ENCODE measurements at regions of chr11 and their contacts with region 1.

Region 1: DNA sequence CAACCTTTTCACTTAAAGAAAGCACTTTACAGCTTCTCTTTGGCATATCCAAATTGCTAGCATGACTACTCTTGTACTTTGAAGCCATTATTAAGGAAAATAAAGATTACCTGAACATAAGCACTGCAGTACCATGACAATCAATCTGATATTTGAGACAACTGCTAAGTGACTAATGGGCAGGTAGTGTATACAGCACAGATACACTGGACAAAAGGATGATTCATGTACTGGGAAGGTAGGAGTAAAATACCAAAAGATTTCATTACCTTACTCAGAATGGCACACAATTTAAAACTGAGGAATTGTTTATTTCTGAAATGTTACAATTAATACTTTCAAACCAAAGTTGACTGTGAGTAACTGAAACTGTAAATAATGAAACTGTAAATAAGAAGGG is 1054.3 kb upstream of the TENM4 start:
- DNase-seq: no peak
- H3K4me3 ChIP-seq: no peak overlapping the region
- H3K4me3 Mint-ChIP-seq: no peak overlapping the region
- H3K27ac ChIP-seq: no peak overlapping the region
- H3K27ac Mint-ChIP-seq: no peak overlapping the region
- H3K4me1 ChIP-seq: no peaks in the 10 kb centered on the region
- H3K4me1 Mint-ChIP-seq: no peaks in the 10 kb centered on the region
- H3K27me3 ChIP-seq: no peaks in the 10 kb centered on the region
- H3K27me3 Mint-ChIP-seq: no peaks in the 10 kb centered on the region

Region 2: GRCh38 chr11:80505771-80506170 is 10.7 kb after region 1 on chr11:
- CTCF ChIA-PET with region 1: no interaction called
- POLR2A ChIA-PET with region 1: no interaction called
- intact Hi-C with region 1: no loop called
- DNase-seq: no peak
- H3K4me3 ChIP-seq: no peak overlapping the region
- H3K4me3 Mint-ChIP-seq: no peak overlapping the region
- H3K27ac ChIP-seq: no peak overlapping the region
- H3K27ac Mint-ChIP-seq: no peak overlapping the region
- H3K4me1 ChIP-seq: no peaks in the 10 kb centered on the region
- H3K4me1 Mint-ChIP-seq: no peaks in the 10 kb centered on the region
- H3K27me3 ChIP-seq: no peaks in the 10 kb centered on the region
- H3K27me3 Mint-ChIP-seq: no peaks in the 10 kb centered on the region

Region 3: DNA sequence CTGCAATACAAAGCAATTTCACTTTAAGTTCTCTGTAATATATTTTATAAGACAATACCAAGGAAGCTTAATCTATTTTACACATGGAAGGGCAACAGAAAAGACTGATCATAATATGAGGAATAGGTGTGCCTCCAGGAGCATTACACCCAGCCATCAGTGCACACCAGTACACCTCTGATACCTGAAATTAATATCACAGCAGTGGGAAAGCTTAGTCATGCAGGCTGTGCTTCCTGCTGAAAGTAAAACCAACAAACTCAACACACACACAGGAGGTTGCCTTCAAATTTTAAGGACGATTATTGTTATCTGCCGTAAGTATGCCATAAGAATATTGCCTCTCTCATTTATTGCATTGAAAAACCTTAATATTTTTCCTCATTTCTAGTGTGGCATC is 64.8 kb after region 1 on chr11:
- CTCF ChIA-PET with region 1: no interaction called
- POLR2A ChIA-PET with region 1: no interaction called
- intact Hi-C with region 1: loop called (anchors 10 kb)
- DNase-seq: no peak
- H3K4me3 ChIP-seq: no peak overlapping the region
- H3K4me3 Mint-ChIP-seq: no peak overlapping the region
- H3K27ac ChIP-seq: no peak overlapping the region
- H3K27ac Mint-ChIP-seq: no peak overlapping the region
- H3K4me1 ChIP-seq: no peaks in the 10 kb centered on the region
- H3K4me1 Mint-ChIP-seq: no peaks in the 10 kb centered on the region
- H3K27me3 ChIP-seq: no peaks in the 10 kb centered on the region
- H3K27me3 Mint-ChIP-seq: no peaks in the 10 kb centered on the region

Measured in CD4-positive, alpha-beta memory T cell (primary cell).